HCT116 (cell line): ENCODE measurements at regions of chr19 and their contacts with region 1.

Region 1: GRCh38 chr19:46016426-46017094 is 6.3 kb downstream of the PGLYRP1 start:
- DNase-seq: peak; percentile 45
- ATAC-seq: peak; percentile 92
- H3K4me3 ChIP-seq: no peak overlapping the region
- H3K27ac ChIP-seq: no peak overlapping the region; the same call in 1 of the 2 replicates
- H3K4me1 ChIP-seq: peaks cover 3 to 14% of the 10 kb centered on the region in 2 experiments; a peak in 3 of 4 replicates
- H3K27me3 ChIP-seq: no peaks in the 10 kb centered on the region
- CTCF ChIP-seq: peak; percentile 52 to 79 (median 64)
- POLR2A ChIP-seq: no peak
- RAD21 ChIP-seq: peak; percentile 59

Region 2: DNA sequence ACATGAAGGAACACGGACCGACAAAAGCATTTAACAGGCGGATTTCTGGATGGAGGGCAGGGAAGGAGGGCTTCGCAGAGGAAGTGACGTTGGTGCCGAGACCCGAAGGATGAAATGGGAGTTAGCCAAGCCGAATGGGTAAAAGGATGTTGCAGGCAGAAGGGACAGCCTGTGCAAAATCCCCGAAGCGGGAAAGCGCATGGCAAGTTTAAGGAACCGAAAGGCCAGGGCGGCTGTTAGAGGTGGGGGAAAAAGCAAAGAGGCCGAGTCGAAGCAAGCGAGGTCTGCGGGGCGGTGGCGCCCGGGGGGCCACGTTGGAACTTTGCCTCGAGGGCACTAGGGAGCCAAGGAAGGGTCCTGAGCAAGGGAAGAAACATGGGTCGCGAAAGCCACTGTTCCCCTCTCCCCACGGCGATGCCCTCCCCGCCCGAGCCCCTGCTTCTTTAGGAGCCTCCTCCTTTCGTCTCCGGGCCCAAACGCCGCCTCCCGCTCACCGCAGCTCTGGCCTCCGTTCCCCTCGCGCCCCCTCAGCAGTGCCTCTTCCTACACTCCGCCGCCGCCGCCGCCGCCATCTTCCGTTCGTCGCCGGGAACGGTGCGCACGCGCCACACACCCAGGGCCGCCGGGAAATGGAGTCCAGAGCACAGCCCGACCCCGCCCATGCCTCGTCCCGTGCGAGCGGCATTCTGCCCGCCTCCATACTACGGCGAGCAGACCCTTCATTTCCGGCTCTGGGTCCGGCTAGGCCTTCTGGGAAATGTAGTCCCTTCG is 153.8 kb before region 1 on chr19 and contains the start of gene SYMPK:
- CTCF ChIA-PET with region 1: interaction called, 11 read pairs
- POLR2A ChIA-PET with region 1: interaction called, 3 read pairs
- RAD21 ChIA-PET with region 1: no interaction called
- intact Hi-C with region 1: no loop called
- DNase-seq: peak; percentile 96
- ATAC-seq: peak; percentile 91
- H3K4me3 ChIP-seq: peak within 1 kb of the TSS; percentile 91 to 93
- H3K27ac ChIP-seq: peak within 1 kb of the TSS; percentile 91
- H3K4me1 ChIP-seq: peaks cover 11 to 35% of the 10 kb centered on the region in 2 experiments
- H3K27me3 ChIP-seq: no peaks in the 10 kb centered on the region
- CTCF ChIP-seq: no peak
- POLR2A ChIP-seq: peak; percentile 52
- RAD21 ChIP-seq: no peak
- total RNA-seq, gene SYMPK: 117 TPM

Region 3: DNA sequence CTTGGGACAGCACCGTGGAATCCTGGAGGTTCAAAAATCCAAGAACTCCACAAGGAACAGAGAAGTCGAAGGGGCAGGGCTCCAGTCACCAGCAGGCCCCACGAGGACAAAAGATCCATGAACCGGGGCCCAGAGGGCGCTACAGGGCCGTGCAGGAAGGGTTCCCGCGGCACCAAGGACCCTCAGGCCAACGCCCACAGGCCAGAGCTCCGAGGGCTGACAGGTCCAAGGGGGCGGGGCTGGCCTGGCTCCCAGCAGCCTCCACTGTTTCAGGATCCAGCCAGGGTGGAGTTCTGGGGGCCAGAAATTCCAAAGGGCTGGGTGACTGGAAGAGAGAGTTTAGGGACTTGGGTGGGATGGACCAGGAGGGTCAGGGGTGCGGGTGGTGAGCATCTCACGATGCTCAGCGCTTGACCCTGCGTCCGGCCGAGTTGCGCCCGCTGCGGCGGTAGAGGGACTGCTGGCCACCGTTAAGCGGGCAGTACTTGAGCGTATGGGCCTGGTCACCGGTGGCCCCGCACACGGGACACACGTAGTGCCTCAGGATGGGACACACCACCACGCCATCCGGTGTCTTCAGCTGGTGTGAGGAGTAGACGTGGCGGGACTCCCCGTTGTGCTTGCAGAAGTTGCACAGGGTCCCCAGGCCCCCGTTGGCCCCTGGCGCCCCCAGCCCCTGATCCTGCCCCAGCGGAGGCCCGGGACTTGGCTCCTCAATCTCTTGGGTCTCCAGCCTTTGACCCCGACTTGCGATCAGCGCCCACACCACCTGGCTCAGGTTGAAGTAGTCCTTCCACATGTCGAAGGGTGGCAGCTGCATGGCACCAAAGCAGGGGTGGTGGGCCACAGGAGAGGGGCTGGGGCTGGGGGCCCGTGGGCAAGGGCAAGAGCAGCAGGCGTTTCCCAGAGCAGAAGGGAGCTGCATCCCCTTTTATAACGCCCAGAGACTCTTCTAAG is 102.4 kb before region 1 on chr19 and contains the start of gene NANOS2:
- CTCF ChIA-PET with region 1: interaction called, 7 read pairs
- POLR2A ChIA-PET with region 1: no interaction called
- RAD21 ChIA-PET with region 1: no interaction called
- intact Hi-C with region 1: loop called (anchors 5 kb)
- DNase-seq: peak; percentile 56
- ATAC-seq: peak; percentile 91
- H3K4me3 ChIP-seq: no peak within 1 kb of the TSS
- H3K27ac ChIP-seq: no peak within 1 kb of the TSS
- H3K4me1 ChIP-seq: peaks cover 4 to 12% of the 10 kb centered on the region in 2 experiments; a peak in 3 of 4 replicates
- H3K27me3 ChIP-seq: no peaks in the 10 kb centered on the region
- CTCF ChIP-seq: peak; percentile 52 to 69 (median 55)
- POLR2A ChIP-seq: no peak
- RAD21 ChIP-seq: peak; percentile 79
- total RNA-seq, gene NANOS2: not detected

Region 4: DNA sequence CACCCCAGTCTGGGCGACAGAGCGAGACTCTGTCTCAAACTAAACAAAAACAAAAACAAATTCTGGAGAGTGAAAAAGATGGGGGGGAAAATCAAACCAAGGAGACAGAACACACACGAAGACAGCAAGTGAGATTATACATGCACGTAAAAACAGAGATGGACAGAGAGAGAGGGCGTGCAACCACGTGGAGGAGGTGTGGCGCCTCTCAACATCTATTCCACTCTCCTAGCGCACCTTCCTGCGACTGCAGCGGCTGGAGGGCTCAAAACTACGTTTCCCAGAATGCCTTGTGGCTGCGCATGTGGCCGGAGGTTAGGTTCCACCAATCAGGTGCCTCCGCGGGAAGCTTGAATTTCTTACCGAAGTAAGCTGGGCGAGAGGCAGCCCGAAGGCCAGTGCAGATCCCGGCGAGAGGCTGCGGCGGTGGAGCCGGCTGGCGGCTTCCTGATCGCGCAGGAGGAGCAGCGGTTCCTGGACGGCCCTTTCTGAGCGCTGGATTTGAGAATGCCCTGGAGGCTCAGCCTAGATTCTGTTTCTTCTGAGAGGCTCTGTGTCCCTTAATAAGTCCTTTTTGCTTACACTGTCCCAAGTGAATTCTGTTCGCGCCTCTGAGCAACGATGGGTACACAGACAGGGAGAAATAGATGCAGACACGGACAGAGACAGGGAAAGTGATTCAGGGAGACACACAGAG is 88.8 kb before region 1 on chr19:
- CTCF ChIA-PET with region 1: no interaction called
- POLR2A ChIA-PET with region 1: no interaction called
- RAD21 ChIA-PET with region 1: no interaction called
- intact Hi-C with region 1: no loop called
- DNase-seq: peak; percentile 93
- ATAC-seq: peak; percentile 98
- H3K4me3 ChIP-seq: peak overlapping the region; percentile 20 to 33; a peak in 3 of 4 replicates
- H3K27ac ChIP-seq: peak overlapping the region; percentile 8; the same call in 1 of the 2 replicates
- H3K4me1 ChIP-seq: peaks cover 12 to 29% of the 10 kb centered on the region in 2 experiments
- H3K27me3 ChIP-seq: no peaks in the 10 kb centered on the region
- CTCF ChIP-seq: no peak; a peak in 1 of 6 replicates
- POLR2A ChIP-seq: no peak
- RAD21 ChIP-seq: peak; percentile 50; the same call in 1 of the 2 replicates

Region 5: DNA sequence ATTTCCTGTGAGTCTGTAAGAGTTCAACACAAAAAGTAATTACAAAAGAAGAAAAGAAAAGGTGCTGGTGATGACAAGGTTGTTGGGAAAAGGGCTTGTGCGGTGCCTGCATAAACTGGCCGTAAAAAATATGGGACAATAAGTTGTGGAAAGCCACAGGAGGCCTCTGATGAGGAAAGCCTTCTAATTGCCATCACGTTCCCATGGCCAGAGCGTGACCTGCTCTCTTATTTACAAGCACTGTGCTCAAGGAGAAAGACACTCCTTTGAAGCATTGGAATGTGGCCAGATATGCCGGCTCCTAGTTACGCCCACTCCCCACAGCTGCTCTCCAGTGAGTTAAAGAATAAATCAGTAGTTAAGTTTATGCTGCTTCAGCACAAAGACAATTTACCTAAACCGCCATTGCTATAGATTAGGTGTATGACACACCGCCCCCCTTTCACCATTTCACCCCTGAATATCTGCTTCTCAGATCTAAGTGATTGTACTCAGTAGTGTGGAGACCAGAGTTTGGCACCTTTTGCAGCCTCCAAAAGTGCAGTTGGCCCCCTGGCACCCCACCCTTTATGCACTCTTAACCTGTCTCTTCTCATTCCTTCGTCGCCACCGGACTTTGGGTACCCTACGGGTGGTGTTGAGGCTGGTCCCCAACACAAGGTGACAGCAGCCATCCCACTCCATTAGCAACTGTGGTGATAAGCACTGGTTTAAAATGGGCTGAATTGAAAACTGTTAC is 14.4 kb after region 1 on chr19:
- CTCF ChIA-PET with region 1: interaction called, 19 read pairs
- POLR2A ChIA-PET with region 1: no interaction called
- RAD21 ChIA-PET with region 1: no interaction called
- intact Hi-C with region 1: no loop called
- DNase-seq: no peak
- ATAC-seq: no peak
- H3K4me3 ChIP-seq: no peak overlapping the region
- H3K27ac ChIP-seq: no peak overlapping the region
- H3K4me1 ChIP-seq: no peaks in the 10 kb centered on the region
- H3K27me3 ChIP-seq: no peaks in the 10 kb centered on the region
- CTCF ChIP-seq: no peak
- POLR2A ChIP-seq: no peak
- RAD21 ChIP-seq: no peak